ENCODE measurements at regions of chr18 and their contacts with region 1.

Region 1: GRCh38 chr18:21004726-21005125 is 106.9 kb downstream of the ROCK1 start:
- DNase-seq: no peak
- ATAC-seq: peak; percentile 93

Region 2: DNA sequence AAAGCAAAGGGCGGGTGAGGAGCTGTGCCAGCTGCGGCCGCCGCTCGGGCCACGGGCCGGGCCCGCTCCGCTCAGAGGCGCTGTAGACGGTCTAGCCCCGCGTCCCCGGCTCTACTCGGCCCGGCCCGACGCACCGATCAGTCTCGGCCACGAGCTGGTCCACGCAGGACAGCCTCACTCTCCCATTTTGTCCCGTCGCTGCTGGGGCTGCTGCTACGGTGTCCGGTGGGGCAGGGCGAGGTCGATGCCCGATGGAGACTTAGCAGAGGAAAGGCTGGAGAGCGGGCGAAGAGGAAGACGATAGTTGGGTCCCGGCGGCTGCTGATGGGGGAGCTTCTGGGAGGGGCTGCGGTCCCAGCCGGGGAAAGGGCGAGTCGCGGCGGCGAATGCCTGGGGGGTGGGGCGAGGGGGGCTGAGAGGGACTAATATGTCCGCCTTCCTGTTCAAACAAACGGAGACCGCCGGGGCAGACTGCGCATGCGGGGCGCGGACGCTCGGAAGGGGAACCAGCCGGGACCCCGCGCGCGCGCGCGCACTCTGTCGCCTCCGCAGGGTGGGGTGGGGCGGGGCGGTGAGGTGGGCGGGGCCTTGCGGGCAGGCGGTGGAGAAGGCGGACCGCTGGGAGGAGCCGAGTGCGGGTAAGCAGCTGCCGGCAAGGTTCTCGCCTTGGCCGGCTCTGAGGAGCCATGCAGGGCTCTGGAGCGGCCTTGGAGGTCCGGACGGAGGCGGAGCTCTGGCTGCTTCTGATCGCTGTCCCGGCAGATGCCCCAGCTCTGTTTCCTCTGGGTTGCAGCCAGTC is 106.8 kb after region 1 on chr18 and contains the start of gene ROCK1:
- intact Hi-C with region 1: loop called (anchors 5 kb)
- DNase-seq: peak; percentile 100
- ATAC-seq: peak; percentile 96
- total RNA-seq, gene ROCK1: 31.4 TPM

Region 3: DNA sequence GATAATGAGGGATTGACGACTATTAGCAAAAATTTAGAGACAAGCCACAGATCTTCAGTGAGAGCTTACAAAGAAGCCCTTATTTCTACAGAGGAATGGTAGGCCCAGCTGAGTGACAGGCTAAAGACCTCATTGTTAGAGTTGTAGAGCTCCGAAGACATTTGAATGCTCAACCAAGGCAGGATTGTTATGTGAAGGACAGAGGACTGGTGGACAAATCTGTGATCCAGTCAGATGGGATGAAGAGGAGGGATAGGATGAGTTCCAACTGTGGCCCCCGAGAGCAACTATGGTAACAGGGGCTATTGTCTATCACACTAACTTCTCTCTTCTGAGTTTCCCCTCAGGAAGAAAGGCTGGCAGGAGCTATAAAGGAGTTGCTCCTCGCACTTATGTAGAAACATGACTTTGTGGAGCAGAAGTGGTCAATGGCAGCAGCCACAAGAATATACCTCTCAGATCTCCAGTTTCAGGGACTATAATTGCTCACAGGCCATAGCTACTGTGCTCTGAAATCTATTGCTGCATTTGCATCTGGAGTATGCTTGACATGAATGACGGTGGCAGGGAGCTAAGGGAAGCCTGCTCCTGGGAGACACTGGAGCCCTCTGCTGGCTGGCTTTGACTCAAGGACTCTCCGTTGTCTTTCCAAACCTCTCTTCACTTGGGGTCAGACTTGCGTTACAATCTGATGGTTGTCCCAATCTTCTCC is 187.0 kb after region 1 on chr18:
- intact Hi-C with region 1: no loop called
- DNase-seq: peak; percentile 50
- ATAC-seq: peak; percentile 78